ENCODE measurements at regions of chr1 and their contacts with region 1.

Region 1: DNA sequence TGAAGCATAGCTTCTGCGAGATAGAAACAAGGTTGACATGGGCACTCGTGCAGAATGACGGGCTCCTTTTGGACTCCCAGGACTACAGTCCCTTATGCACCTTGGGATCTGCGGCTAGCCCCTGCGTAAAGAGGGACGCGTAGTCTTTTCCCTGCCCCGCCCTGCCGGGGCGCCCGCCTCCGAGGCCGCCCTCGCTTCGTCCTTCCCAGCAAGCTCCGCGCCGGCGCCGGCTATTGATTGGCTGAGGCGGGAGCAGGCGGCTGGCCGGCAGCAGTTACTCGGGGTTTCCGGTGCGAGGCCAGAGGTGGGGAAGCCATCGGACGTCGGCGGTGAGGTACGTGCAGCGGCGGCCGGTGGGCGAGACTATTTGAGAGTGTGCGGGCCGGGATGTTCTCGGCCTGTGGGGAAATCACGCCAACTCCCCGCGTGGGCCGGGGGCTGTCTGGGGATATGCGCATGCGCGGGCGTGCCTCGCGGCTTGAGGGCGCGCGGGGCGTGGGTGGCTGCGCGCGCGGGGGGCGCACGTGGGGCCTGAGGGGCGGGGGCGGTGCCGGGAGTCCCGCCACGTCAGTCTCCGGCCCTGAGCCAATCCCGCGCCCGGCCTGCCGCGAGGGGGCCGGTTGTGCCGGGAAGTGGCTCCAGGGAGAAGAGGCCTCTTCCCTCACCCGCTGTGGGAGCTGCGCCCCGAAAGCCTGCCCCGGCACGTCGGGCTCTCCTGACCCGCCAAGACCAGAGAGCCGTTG is at the start of gene TXLNA:
- DNase-seq: peak; percentile 76 to 93 (median 88)
- ATAC-seq: peak; percentile 87 to 88
- H3K4me3 Mint-ChIP-seq: peak within 1 kb of the TSS; percentile 86 to 95 (median 91)
- H3K27ac Mint-ChIP-seq: peak within 1 kb of the TSS; percentile 85 to 98 (median 95)
- H3K4me1 Mint-ChIP-seq: peaks cover 27 to 49% (median 42%) of the 10 kb centered on the region in 4 donors
- H3K27me3 Mint-ChIP-seq: no peaks in the 10 kb centered on the region
- polyA plus RNA-seq, gene TXLNA: 19.0 to 28.3 (median 24.4) TPM

Region 2: DNA sequence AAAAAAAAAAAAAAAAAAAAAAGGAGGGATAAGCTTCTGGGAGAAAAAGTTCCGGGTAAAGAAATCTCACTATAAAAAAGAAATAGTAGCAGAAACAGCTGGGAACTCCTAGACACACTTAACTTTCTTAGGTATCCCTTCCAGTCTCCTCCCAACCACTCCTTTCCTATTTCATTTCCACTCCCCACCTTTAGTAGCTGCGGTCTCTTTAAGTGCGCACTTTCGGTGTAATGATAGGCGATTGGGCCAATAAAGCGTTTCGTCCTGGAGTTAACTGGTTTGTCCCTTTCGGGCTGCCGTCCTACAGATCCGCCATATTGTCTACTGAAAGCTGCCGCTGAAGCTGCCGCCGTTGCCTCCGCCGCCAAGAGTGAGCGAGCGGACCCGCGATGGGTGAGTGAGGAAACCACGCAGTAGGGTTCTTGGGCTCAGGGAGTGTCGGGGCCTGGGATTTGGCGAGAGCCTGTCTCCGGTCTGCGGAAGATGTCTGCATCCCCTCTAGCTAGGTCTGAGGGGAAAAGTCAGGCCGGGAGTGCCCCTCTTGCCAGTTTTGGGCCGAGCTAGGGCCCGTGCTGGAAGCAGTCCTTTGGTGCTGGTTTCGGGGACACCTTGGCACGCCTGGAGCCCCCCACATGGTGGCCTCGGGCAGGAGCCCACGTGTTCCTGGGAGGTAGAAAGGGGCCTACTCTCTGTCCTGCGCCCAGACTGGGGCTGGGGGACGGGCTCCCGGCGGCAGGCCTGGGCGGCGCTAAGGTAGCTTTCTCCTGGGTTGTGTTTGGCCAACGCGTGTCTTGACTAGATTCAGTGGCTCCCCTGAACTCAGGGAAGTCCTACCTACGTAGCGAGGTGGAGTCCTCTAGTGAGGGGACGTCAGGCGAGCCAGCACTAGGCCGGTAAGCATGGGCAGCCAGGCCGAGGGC is 71.6 kb before region 1 on chr1 and contains the start of gene KPNA6:
- POLR2A ChIA-PET with region 1: interaction called, 23 read pairs
- DNase-seq: peak; percentile 76 to 97 (median 92)
- ATAC-seq: peak; percentile 82 to 87
- H3K4me3 Mint-ChIP-seq: peak within 1 kb of the TSS; percentile 96 to 100 (median 100)
- H3K27ac Mint-ChIP-seq: peak within 1 kb of the TSS; percentile 95 to 99 (median 99)
- H3K4me1 Mint-ChIP-seq: peaks cover 14 to 53% (median 44%) of the 10 kb centered on the region in 4 donors
- H3K27me3 Mint-ChIP-seq: no peaks in the 10 kb centered on the region
- polyA plus RNA-seq, gene KPNA6: 26.5 to 31.9 (median 28.3) TPM

Region 3: DNA sequence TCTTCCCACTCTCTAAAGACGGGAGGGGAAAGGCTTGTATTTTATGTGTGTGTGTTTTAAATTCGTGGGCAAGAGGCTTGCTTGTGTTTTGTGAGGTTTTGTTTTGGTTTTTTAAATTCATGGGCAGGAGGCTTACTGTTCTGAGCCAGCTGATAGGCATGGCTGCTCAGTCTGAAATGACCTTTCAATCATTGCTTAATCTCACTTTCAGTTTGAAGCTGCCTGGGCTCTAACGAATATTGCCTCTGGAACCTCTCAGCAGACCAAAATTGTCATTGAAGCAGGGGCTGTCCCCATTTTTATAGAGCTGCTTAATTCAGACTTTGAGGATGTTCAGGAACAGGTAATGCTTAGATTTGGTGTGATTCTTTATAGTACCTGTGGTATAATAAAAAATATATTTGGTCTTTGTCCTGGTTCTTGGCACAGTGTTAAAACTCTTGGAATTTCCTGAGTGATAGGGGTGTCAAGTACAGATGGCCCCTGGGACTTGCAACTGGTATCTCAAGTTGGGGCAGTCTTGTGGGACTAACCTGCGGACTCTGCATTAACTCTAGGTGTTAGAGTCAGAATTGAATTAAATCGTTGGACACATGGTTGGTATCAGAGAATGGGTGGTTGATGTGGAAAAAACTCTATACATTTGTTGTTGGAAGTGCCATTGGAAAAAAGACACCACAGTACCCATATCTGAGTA is 20.3 kb before region 1 on chr1:
- POLR2A ChIA-PET with region 1: no interaction called
- DNase-seq: no peak
- ATAC-seq: no peak
- H3K4me3 Mint-ChIP-seq: no peak overlapping the region
- H3K27ac Mint-ChIP-seq: peak overlapping the region in 2 of 10 donors; percentile 34 to 41
- H3K4me1 Mint-ChIP-seq: peaks cover 0 to 3% (median under 1%) of the 10 kb centered on the region in 4 donors
- H3K27me3 Mint-ChIP-seq: no peaks in the 10 kb centered on the region

Region 4: DNA sequence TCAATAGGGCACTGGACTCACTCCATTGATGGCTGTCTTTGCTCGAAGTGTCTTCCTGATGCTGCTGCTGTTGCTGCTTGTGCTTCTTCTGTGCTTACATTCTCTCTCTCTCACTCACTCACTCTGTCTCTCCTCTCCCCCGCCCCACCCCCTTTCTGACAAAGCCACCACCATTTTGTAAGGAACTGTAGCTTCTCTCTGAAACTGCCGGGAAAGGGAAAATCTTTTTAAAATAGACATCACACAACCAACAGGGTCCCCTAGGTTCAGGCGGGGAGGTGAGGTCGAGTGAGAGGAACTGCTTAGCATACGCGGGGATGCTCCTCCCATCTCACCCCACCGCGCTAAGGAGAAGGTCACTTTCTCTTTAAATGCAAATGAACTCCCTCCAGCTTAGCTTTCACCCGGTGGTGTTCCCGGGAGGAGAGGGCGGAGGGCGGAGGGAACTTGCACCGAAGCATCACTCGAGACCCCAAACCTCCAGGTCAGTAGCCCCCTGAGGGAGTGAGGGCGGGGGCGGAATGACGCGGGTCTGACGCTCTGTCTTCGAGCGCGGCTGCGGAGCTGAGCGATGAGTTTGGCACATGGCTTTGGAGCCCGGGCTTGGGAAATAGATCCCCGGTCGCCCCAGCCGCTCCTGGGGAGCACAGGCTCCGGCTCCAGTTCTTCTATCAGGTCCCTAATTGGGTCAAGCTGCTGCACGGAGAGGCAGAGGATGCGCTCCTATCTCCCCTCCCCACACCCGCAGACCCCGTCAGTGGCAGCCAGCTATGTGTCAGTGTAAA is 20.8 kb after region 1 on chr1 and contains the start of gene CCDC28B:
- POLR2A ChIA-PET with region 1: interaction called, 23 read pairs
- DNase-seq: peak; percentile 34 to 74 (median 63)
- ATAC-seq: peak; percentile 54 to 56
- H3K4me3 Mint-ChIP-seq: peak within 1 kb of the TSS; percentile 86 to 97 (median 95)
- H3K27ac Mint-ChIP-seq: peak within 1 kb of the TSS; percentile 89 to 98 (median 94)
- H3K4me1 Mint-ChIP-seq: peaks cover 35 to 60% (median 59%) of the 10 kb centered on the region in 4 donors
- H3K27me3 Mint-ChIP-seq: no peaks in the 10 kb centered on the region
- polyA plus RNA-seq, gene CCDC28B: 15.4 to 17.3 (median 16.3) TPM

Region 5: DNA sequence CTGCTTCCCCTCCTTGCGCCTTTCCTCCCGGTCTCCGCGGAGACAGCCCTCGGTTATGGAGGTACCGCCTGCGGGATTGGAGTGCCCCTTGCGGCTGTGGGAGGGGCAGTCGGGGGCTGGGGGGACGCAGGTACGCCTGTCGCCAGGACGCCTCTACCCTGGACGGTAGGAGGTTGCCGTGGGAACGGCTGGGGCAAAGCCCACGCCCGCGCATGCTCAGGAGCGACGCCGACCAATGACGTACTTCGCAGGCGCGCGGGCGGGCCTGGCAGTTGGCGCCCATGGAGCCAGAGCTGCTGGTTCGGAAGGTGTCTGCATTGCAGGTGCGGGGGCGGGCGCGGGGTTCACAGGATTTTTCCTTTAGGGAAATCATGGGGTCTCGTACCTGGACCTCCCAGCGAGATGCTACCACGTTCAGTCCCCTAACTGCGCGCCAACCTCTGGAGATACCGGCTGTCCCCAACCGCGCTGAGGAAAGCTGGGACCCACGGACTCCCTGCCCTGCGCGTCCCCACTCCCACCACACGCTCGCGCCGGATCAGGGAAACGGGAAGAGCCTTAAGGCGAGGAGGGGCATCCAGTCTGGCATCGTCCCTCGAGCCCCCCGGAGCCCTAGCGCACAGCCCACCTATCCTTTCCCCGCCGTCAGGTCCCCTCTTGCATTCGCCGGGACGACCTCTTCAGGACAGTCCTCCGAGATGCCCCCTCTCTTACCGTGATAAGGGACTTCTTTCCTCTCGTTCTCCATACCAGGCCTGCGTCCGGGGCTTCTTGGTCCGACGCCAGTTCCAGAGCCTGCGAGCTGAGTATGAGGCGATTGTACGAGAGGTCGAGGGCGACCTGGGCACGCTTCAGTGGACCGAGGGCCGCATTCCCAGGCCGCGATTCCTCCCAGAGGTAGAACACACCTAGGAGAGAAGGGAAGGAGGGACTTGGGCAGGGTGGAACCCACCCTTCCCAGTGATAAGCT is 26.1 kb after region 1 on chr1 and contains the start of gene IQCC:
- POLR2A ChIA-PET with region 1: interaction called, 23 read pairs
- DNase-seq: peak; percentile 77 to 92 (median 85)
- ATAC-seq: peak; percentile 69 to 74
- H3K4me3 Mint-ChIP-seq: peak within 1 kb of the TSS; percentile 84 to 92 (median 87)
- H3K27ac Mint-ChIP-seq: peak within 1 kb of the TSS; percentile 53 to 97 (median 93)
- H3K4me1 Mint-ChIP-seq: peaks cover 18 to 38% (median 31%) of the 10 kb centered on the region in 4 donors
- H3K27me3 Mint-ChIP-seq: no peaks in the 10 kb centered on the region
- polyA plus RNA-seq, gene IQCC: 0.60 to 0.92 (median 0.73) TPM

Measured in naive thymus-derived CD8-positive, alpha-beta T cell (primary cell).